Cardiac septum (tissue), 1 donor: ENCODE measurements at regions of chr15 and their contacts with region 1.

Region 1: DNA sequence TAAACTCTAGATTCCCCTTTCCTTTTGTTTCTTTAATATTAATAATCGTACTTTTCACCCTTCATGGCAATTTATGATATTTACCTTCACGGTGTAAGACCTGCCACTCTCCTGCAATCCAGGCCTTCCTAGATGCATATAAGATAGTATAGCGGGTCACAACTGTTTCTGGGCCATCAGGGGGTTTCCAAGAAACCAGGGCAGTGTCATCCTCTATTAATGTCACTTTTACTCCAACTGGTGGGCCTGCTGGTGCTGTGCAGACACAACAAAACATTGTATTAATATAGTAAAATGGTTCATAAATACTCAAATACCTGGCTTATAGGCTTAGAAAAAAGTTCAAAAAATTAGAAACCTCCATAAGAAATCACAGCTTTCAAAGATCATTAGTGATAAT is 48.9 kb upstream of the PYGO1 start:
- DNase-seq: no peak

Region 2: DNA sequence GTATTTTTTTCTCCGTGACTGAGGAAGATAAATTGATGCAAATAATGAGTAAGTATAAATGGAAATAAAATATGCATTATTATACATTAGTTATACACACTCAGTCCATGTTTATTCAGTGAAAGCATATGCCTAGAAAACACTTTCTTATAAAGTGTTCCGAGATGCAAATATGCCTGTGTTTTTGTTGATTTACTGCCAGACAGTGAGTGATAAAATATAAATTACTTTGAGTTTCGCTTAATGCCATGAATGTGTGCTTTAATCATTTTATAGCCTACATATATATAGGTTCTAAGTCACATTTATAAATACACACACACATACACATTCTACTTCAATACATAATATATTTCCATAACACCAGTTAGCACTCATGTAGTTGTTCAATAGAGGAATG is 1089.6 kb before region 1 on chr15:
- intact Hi-C with region 1: no loop called
- DNase-seq: no peak

Region 3: DNA sequence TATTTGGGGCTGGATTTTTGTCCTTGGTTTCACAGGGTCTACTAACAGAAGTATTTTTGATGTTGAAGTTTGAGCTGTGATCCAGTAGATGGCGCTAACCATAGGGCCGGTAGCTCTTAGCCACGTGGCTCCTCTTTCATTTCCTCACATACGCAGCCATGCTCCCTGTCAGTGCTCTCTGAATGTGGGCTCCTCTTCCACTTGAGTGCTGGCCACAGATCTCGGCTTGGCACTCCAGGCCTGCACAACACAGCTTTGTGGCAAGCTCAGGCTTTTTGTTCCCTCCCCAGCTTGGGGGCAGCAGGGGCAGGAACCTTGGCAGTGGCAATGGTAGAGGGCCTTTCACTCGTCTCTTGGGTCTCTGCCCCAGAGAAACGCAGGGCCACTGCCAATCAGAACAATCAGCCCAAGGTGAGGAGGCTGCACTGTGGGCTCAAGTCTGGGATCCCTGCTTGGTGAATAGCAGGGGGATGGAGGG is 110.5 kb before region 1 on chr15:
- intact Hi-C with region 1: loop called (anchors 2 kb)
- DNase-seq: no peak